ENCODE measurements at regions of chr1 and their contacts with region 1.

Region 1: DNA sequence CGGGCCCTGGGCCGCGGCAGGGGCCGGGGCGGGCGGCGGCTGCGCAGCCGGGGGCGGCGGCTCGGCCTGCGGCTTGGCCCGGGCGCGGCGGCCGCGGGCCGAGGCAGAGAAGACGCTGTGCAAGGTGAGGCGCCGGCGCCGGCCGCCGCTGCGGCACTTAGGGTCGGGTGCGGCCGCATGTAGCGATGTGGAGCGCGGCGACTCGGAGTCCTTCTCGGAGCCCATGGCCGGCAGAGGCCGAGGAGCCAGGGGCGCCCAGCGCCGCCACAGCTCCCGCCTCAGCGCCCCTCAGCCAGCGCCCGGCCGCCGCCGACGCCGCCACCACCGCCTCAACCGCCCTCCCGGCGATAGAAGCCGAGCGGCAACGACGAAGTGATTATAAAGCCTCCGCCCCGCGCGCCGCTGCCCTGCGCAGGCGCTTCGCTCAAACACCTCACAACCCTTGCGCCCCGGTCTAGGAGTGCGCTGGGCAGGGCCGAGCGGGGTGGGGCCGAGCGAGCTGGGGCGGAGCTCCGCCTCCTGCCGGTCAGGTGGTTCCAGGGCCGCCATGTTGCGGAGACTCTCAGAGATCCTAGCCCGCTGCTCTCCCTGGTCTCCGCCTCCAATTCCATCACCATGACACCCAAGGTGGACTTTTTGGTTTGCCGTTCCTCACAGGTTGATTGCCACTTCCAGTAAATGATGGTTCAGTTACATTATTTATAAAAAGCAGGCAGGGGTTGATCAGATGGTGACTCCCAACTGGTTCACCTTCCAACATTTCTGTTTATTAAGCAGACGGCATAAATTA is at the start of gene RNF19B:
- DNase-seq: peak; percentile 92 to 100 (median 94)

Region 2: DNA sequence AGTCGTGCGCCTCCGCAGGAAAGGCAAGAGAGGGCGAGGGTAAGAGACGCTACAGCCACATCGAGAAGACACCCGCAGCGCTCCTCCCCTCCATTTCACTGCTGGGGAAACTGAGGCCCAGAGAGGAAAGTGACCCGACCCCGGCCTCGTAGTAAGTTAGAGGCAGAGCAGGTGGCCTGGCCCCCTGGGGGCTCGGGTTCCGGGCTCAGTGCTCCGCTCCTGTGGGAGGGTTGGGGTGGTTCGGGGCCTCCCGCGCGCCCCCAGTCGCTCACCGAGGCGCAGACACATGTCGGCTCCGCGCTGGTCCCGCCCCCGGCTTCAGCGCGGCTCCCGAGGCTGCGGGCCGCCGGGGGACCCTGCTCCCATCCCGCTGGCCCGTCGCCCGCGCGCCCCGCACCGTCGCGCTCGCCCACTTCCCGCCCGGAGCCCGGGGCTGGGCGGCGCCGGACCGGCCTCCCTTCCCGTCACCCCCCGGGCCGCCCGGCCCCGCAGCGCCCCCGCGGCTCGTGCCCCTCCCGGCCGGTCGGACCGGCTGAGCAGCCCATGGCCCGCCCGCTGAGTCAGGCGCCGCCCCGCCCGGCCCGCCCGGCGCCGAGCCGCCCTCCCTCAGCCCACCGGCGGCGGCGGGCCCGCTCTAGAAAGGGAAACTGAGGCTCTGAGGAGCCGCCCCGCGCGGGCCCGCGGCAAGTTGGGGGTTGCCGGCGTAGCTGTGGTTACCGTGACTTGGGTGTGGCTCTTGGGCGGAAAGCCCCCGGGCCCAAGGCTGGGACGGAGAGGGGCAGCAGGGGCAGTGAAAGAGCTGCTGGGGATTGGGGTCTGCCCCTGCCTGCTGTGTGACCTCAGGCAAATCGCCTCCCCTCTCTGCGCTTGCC is 63.5 kb before region 1 on chr1 and contains the start of gene TMEM54:
- intact Hi-C with region 1: no loop called
- DNase-seq: peak in 3 of 10 donors; percentile 72 to 90 (median 80)

Region 3: GRCh38 chr1:33007190-33008050 is 42.8 kb after region 1 on chr1:
- intact Hi-C with region 1: loop called (anchors 5 kb)
- DNase-seq: peak in 6 of 10 donors; percentile 25 to 92 (median 55)

Region 4: GRCh38 chr1:33036526-33037503 is 72.2 kb after region 1 on chr1 and contains the start of gene AK2:
- intact Hi-C with region 1: loop called (anchors 10 kb)
- DNase-seq: peak; percentile 93 to 100 (median 98)